A549 (cell line): ENCODE measurements at regions of chr6 and their contacts with region 1.

Region 1: GRCh38 chr6:154928325-154928922 is 66.7 kb upstream of the TIAM2 start:
- DNase-seq: peak; percentile 36 to 50
- ATAC-seq: peak; percentile 56 to 82; a peak in 4 of 6 replicates
- H3K4me3 ChIP-seq: no peak overlapping the region
- H3K27ac ChIP-seq: no peak overlapping the region
- H3K4me1 ChIP-seq: peaks cover 14% of the 10 kb centered on the region
- CTCF ChIP-seq: peak; percentile 81
- EP300 ChIP-seq: no peak
- POLR2A ChIP-seq: no peak
- RAD21 ChIP-seq: peak; percentile 90 to 92

Region 2: DNA sequence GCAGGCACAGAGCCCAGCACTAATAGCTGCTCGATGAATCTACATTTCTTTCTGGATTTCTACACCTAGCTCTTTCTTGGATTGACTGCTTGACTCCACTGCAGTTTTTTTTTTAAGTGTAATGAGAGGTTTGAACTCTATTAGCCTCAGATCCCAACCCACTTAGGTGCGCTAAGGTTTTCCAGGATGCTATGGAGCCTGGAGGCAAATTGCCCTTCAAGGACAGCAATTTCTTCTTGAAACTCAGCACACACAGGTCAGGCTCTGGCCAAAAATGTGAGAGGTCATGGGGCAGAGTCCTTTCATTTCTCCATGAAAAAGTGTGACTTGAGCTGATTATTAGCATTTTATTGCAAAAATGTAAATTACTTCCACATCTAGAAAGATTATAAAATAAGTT is 14.4 kb after region 1 on chr6:
- CTCF ChIA-PET with region 1: interaction called, 25 read pairs
- POLR2A ChIA-PET with region 1: no interaction called
- DNase-seq: no peak
- ATAC-seq: no peak
- H3K4me3 ChIP-seq: no peak overlapping the region
- H3K27ac ChIP-seq: no peak overlapping the region
- H3K4me1 ChIP-seq: no peaks in the 10 kb centered on the region
- CTCF ChIP-seq: no peak
- EP300 ChIP-seq: no peak
- POLR2A ChIP-seq: no peak
- RAD21 ChIP-seq: no peak

Region 3: DNA sequence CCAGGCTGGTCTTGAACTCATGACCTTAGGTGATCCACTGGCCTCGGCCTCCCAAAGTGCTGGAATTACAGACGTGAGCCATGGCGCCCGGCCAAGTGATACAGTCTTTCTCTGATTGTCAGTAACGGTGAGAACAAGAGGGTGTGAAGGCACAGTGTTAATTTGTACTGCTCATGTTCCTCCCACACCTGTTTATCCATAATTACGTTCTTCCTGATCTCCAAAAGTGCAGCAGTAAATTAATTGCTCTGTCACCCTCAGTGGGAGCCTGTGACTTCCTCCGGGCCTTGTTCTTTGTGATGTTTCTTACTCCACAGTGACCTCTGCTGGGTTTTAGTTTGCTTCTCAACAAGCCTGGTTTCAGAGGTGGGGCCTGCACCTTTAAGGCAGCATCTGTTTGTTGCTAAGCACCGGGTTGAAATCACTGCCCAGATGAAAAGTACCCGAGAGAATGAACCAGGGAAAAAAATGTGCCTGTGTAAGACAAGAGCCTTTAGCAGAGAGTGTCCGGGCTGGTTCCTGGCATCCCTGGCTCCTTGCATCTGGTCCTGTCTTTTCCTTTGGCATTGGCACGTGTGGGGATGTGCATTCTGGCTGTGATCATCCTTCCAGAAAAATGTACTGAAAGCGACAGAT is 246.3 kb after region 1 on chr6:
- CTCF ChIA-PET with region 1: interaction called, 55 read pairs
- POLR2A ChIA-PET with region 1: no interaction called
- DNase-seq: peak; percentile 76 to 82
- ATAC-seq: peak; percentile 93 to 95
- H3K4me3 ChIP-seq: no peak overlapping the region
- H3K27ac ChIP-seq: peak overlapping the region in 1 of 2 experiments; percentile 56; a peak in 2 of 6 replicates
- H3K4me1 ChIP-seq: peaks cover 29% of the 10 kb centered on the region
- CTCF ChIP-seq: peak; percentile 61
- EP300 ChIP-seq: no peak
- POLR2A ChIP-seq: no peak
- RAD21 ChIP-seq: peak; percentile 87 to 88

Region 4: DNA sequence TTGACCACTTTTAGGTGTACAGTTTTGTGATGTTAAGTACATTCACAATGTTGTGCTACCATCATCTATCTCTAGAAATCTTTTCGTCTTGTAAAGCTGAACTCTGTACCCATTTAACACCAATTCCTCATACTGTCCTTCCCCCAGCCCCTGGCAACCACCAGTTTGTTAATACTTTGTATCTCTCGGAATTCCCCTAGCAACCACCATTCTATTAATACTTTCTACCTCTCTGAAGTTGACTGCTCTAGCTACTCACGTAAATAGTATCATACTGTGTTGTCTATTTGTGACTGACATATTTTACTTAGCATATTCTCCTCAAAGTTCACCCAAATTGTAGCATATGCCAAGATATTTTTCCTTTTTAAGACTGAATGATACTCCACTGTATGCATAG is 253.1 kb after region 1 on chr6:
- CTCF ChIA-PET with region 1: interaction called, 16 read pairs
- POLR2A ChIA-PET with region 1: no interaction called
- DNase-seq: no peak
- ATAC-seq: no peak
- H3K4me3 ChIP-seq: no peak overlapping the region
- H3K27ac ChIP-seq: no peak overlapping the region
- H3K4me1 ChIP-seq: peaks cover 12% of the 10 kb centered on the region
- CTCF ChIP-seq: no peak
- EP300 ChIP-seq: no peak
- POLR2A ChIP-seq: no peak
- RAD21 ChIP-seq: no peak

Region 5: GRCh38 chr6:155248008-155249001 is 319.9 kb after region 1 on chr6:
- CTCF ChIA-PET with region 1: interaction called, 18 read pairs
- POLR2A ChIA-PET with region 1: no interaction called
- DNase-seq: peak; percentile 21 to 50
- ATAC-seq: peak; percentile 49 to 81; a peak in 3 of 6 replicates
- H3K4me3 ChIP-seq: no peak overlapping the region
- H3K27ac ChIP-seq: peak overlapping the region; percentile 29 to 80; a peak in 3 of 6 replicates
- H3K4me1 ChIP-seq: peaks cover 15% of the 10 kb centered on the region
- CTCF ChIP-seq: peak; percentile 53
- EP300 ChIP-seq: no peak
- POLR2A ChIP-seq: no peak
- RAD21 ChIP-seq: peak; percentile 64 to 71

Region 6: DNA sequence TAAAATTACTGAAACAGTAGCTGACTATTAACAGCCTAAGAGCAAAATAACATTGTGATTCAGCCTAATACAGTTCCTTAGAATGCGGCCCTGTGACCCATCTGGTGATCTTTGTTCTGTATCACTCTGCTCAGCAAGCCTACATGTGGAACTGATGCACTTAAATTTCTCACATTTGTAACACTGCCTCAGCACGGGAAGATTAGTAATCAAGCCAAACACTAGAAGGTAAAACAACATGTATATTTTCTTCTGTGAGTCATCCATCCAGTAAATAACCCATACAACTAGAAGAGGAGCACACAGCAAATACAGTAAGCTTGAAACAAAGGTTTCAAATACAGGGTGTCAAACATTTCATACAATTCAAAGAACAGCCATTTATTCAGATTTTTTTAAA is 716.9 kb after region 1 on chr6:
- CTCF ChIA-PET with region 1: no interaction called
- POLR2A ChIA-PET with region 1: no interaction called
- DNase-seq: no peak
- ATAC-seq: no peak
- H3K4me3 ChIP-seq: no peak overlapping the region
- H3K27ac ChIP-seq: no peak overlapping the region
- H3K4me1 ChIP-seq: peaks cover 10% of the 10 kb centered on the region; the same call in 1 of the 3 replicates
- CTCF ChIP-seq: no peak
- EP300 ChIP-seq: no peak
- POLR2A ChIP-seq: no peak
- RAD21 ChIP-seq: no peak